Spleen (tissue), 13 donors: ENCODE measurements at regions of chr7 and their contacts with region 1.

Region 1: GRCh38 chr7:2248984-2249694 is 7.1 kb downstream of the NUDT1 start:
- DNase-seq: peak; percentile 83
- H3K4me3 ChIP-seq: no peak overlapping the region
- H3K27ac ChIP-seq: peak overlapping the region; percentile 25 to 69 (median 67)
- H3K4me1 ChIP-seq: peaks cover 16 to 80% (median 47%) of the 10 kb centered on the region in 6 donors
- H3K27me3 ChIP-seq: no peaks in the 10 kb centered on the region
- CTCF ChIP-seq: no peak
- POLR2A ChIP-seq: no peak

Region 2: DNA sequence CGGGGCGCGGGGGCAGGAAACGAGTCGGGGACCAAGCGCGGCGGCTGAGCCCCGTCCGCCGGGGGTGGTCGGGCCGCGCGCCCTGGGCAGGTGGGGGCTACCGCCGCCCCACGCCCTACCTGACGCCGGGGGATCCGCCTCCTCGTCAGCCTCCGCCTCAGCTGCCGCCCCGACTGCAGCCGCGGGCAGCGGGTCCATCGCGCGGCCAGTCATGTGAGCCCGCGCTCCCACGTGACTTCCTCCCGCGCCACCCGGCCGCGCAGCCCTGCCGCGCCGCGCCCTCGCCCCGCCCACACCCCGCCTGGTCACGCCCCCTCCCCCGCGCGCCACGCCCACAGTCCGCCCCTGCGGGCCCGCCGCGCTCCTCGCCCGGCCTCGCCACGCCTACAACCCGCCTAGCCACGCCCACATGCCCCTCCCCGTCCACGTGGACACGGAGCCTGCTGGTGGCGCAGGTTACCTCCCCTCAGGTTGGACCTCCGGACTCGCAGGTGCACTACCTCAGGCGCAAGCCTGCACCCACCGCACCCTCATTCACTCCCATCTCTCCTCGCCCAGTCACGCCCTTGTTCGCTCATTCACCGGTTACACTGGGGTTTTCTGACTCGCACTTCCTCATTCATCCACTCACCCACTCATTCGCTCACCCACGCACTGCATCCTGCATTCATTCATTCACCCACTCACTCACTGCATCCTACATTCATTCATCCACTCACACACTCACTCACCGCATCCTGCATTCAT is 65.2 kb after region 1 on chr7 and contains the start of gene SNX8:
- intact Hi-C with region 1: loop called (anchors 5 kb)
- DNase-seq: peak; percentile 98
- H3K4me3 ChIP-seq: peak within 1 kb of the TSS; percentile 72 to 97 (median 85)
- H3K27ac ChIP-seq: peak within 1 kb of the TSS; percentile 93 to 98 (median 96)
- H3K4me1 ChIP-seq: peaks cover 14 to 79% (median 52%) of the 10 kb centered on the region in 6 donors
- H3K27me3 ChIP-seq: no peaks in the 10 kb centered on the region
- CTCF ChIP-seq: peak in 5 of 11 experiments; percentile 18 to 30 (median 19)
- POLR2A ChIP-seq: peak in 1 of 3 donors; percentile 60
- total RNA-seq, gene SNX8: 74.0 to 196 (median 93.6) TPM